Naive thymus-derived CD4-positive, alpha-beta T cell (primary cell): ENCODE measurements at regions of chr6 and their contacts with region 1.

Region 1: DNA sequence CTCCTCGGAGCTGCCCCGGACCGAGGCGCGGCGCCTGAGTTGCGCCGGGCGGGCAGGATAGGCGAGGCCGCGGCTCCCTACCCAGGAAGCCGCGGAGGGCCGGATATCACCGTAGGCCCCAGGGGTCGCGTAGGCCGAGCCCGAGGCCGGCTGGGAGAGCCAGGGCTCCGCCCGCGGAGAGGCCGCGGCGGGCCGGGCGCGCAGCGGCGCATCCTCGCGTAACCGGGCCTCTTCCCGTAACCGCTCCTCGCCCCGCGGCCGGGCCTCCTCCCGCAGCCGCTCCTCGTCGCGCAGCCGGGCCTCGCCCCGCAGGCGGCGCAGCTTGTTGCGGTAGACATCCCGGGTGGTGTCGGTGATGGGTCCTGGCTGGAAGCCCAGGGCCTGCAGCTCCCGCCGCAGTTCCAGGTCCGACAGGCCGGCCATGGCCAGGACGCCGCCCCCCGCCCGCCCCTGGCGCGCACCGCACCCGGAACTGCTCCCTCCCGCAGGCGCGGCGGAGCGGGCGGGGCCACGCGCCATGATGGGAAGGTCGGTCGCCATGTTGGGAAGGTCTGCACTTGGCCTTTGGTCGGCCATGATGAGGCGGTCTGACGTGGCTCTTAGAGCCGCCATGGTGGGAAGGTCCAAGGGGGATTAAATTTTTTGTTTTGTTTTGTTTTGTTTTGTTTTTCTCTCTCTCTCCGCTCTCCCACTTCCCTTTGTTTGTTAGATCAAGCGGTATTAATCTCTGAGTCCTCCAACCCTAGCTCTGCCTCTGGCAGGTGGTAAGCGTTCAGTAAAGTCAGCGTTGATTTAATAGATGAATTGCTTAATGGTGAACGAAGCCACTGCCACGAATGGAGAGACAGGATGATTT is at the start of gene LEMD2:
- DNase-seq: peak; percentile 88 to 96 (median 91)
- ATAC-seq: peak; percentile 94
- H3K4me3 ChIP-seq: peak within 1 kb of the TSS; percentile 80
- H3K4me3 Mint-ChIP-seq: peak within 1 kb of the TSS; percentile 93 to 100 (median 98)
- H3K27ac ChIP-seq: peak within 1 kb of the TSS; percentile 92
- H3K27ac Mint-ChIP-seq: peak within 1 kb of the TSS; percentile 95 to 99 (median 97)
- H3K4me1 ChIP-seq: peaks cover 37 to 40% of the 10 kb centered on the region in 2 donors
- H3K4me1 Mint-ChIP-seq: peaks cover 40 to 55% (median 51%) of the 10 kb centered on the region in 7 donors
- H3K27me3 ChIP-seq: no peaks in the 10 kb centered on the region
- H3K27me3 Mint-ChIP-seq: peaks cover 0 to 25% (median 0%) of the 10 kb centered on the region in 5 donors
- total RNA-seq, gene LEMD2: 71.4 to 124 (median 118) TPM

Region 2: GRCh38 chr6:33410050-33410710 is 378.7 kb before region 1 on chr6:
- CTCF ChIA-PET with region 1: no interaction called
- POLR2A ChIA-PET with region 1: no interaction called
- intact Hi-C with region 1: loop called in 1 of 2 experiments (anchors 2 kb)
- DNase-seq: peak; percentile 94 to 98 (median 95)
- ATAC-seq: peak; percentile 82
- H3K4me3 ChIP-seq: peak overlapping the region; percentile 78
- H3K4me3 Mint-ChIP-seq: peak overlapping the region; percentile 85 to 95 (median 90)
- H3K27ac ChIP-seq: peak overlapping the region; percentile 100
- H3K27ac Mint-ChIP-seq: peak overlapping the region; percentile 65 to 99 (median 97)
- H3K4me1 ChIP-seq: peaks cover 35 to 36% of the 10 kb centered on the region in 2 donors
- H3K4me1 Mint-ChIP-seq: peaks cover 25 to 60% (median 46%) of the 10 kb centered on the region in 7 donors
- H3K27me3 ChIP-seq: no peaks in the 10 kb centered on the region
- H3K27me3 Mint-ChIP-seq: no peaks in the 10 kb centered on the region

Region 3: DNA sequence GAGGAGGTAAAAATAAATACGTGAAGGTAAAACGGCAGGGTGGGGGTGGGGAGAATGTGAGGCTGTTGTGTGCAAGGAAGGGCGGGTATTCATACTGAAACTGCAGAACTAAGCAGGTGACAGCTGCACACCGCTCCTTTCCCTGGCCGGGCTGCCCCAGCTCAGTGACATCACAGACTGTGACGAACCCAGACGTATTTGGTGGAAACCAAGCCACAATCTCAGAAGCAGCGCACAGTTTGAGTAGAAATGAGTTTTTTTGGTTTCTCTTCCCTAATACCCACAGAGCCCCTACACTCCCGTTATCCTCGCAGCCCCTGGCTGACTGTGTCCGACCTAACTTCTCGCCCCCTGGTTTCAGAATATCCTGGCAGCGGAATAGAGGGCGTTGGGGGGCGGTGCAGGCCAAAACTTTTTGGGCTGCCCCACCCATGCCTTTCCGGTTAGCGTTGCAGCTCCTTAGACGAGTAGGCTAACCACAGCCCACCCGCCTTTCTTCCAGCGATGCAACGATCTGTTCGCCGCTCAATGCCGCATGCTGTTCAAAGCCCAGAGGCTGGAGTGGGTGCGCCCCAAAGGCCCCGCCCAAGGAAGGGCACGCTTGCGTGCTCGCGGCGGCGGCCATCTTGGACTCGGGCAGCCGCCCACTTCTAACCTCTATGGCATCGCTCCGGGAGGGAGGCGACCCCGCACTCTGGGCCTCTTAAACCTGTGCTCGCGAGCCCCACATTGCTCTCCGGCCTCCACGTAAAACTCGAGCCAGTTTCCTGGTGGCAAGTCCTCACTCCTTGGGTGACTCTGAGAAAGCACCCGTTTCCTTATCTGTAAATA is 217.9 kb before region 1 on chr6:
- CTCF ChIA-PET with region 1: no interaction called
- POLR2A ChIA-PET with region 1: no interaction called
- intact Hi-C with region 1: loop called in 1 of 2 experiments (anchors 5 kb)
- DNase-seq: peak; percentile 81 to 98 (median 95)
- ATAC-seq: peak; percentile 91
- H3K4me3 ChIP-seq: peak overlapping the region; percentile 85
- H3K4me3 Mint-ChIP-seq: peak overlapping the region; percentile 80 to 99 (median 94)
- H3K27ac ChIP-seq: peak overlapping the region; percentile 98
- H3K27ac Mint-ChIP-seq: peak overlapping the region; percentile 99 to 100 (median 100)
- H3K4me1 ChIP-seq: peaks cover 19 to 21% of the 10 kb centered on the region in 2 donors
- H3K4me1 Mint-ChIP-seq: peaks cover 8 to 57% (median 31%) of the 10 kb centered on the region in 7 donors
- H3K27me3 ChIP-seq: no peaks in the 10 kb centered on the region
- H3K27me3 Mint-ChIP-seq: peaks cover 0 to 3% (median 0%) of the 10 kb centered on the region in 5 donors

Region 4: DNA sequence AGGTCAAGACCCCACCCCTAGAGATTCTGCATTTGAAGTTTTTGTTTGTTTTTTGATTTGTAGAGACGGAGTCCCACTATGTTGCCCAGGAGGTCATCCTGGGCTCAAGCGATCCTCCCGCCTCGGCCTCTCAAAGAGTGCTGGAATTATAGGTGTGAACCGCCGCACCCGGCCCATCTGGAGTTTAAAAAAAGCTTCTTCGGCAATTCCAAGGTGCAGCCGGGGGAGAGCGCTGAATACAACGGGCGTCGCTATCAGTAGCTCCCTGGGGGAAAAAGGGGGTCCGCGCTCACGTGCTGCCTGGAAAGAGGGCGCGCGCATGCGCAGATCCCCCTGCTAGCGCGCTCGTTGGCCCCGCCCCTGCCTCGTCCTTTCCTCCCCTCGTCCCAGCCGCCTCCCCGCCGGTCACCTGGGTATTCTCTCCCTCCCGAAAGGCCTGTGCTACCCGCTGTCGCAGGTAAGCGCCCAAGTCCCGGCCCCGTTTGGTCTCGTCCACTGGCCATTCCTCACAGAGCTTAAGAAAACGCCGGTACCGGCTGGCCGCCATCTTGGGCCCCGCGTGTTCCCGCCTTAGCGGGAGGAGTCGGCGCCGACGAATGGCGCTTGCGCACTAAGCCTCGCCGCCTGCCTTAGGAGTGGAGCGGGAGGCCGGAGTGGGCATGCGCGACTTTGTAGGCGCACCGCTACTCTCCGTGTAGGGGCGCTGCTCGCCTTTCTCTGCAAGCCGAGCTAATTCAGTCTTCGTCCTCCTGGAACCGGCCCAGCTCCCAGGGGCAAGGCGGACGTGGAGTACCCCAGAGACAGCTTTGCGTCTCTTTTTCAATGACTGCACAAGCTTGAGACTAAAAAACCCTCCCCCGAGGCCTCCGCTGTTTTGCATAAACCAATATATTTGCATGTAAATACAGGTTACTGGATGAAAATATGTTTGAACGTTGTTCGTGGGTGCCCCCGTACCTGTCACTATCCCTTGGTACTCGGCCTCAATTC is 77.5 kb before region 1 on chr6 and contains the start of gene UQCC2:
- CTCF ChIA-PET with region 1: no interaction called
- POLR2A ChIA-PET with region 1: interaction called, 8 read pairs
- intact Hi-C with region 1: loop called (anchors 1 kb)
- DNase-seq: peak; percentile 94 to 97 (median 97)
- ATAC-seq: peak; percentile 97
- H3K4me3 ChIP-seq: peak within 1 kb of the TSS; percentile 83
- H3K4me3 Mint-ChIP-seq: peak within 1 kb of the TSS; percentile 94 to 99 (median 98)
- H3K27ac ChIP-seq: peak within 1 kb of the TSS; percentile 91
- H3K27ac Mint-ChIP-seq: peak within 1 kb of the TSS; percentile 94 to 98 (median 98)
- H3K4me1 ChIP-seq: peaks cover 9 to 11% of the 10 kb centered on the region in 2 donors
- H3K4me1 Mint-ChIP-seq: peaks cover 22 to 46% (median 36%) of the 10 kb centered on the region in 7 donors
- H3K27me3 ChIP-seq: no peaks in the 10 kb centered on the region
- H3K27me3 Mint-ChIP-seq: peaks cover 0 to 9% (median 0%) of the 10 kb centered on the region in 5 donors
- total RNA-seq, gene UQCC2: 15.7 to 79.8 (median 23.0) TPM

Region 5: GRCh38 chr6:33860706-33861474 is 72.0 kb after region 1 on chr6:
- CTCF ChIA-PET with region 1: no interaction called
- POLR2A ChIA-PET with region 1: interaction called, 8 read pairs
- intact Hi-C with region 1: loop called in 1 of 2 experiments (anchors 5 kb)
- DNase-seq: peak in 7 of 9 donors; percentile 20 to 68 (median 54)
- ATAC-seq: peak; percentile 30
- H3K4me3 ChIP-seq: no peak overlapping the region
- H3K4me3 Mint-ChIP-seq: peak overlapping the region in 9 of 10 donors; percentile 19 to 63 (median 40)
- H3K27ac ChIP-seq: no peak overlapping the region
- H3K27ac Mint-ChIP-seq: peak overlapping the region in 5 of 9 donors; percentile 12 to 82 (median 35)
- H3K4me1 ChIP-seq: peaks cover 44 to 54% of the 10 kb centered on the region in 2 donors
- H3K4me1 Mint-ChIP-seq: peaks cover 31 to 67% (median 57%) of the 10 kb centered on the region in 7 donors
- H3K27me3 ChIP-seq: no peaks in the 10 kb centered on the region
- H3K27me3 Mint-ChIP-seq: peaks cover 0 to 11% (median 9%) of the 10 kb centered on the region in 5 donors

Region 6: GRCh38 chr6:34223956-34224940 is 435.3 kb after region 1 on chr6:
- CTCF ChIA-PET with region 1: no interaction called
- POLR2A ChIA-PET with region 1: no interaction called
- intact Hi-C with region 1: loop called in 1 of 2 experiments (anchors 2 kb)
- DNase-seq: peak; percentile 85 to 97 (median 91)
- ATAC-seq: peak; percentile 99
- H3K4me3 ChIP-seq: peak overlapping the region; percentile 78
- H3K4me3 Mint-ChIP-seq: peak overlapping the region; percentile 42 to 85 (median 76)
- H3K27ac ChIP-seq: peak overlapping the region; percentile 93
- H3K27ac Mint-ChIP-seq: peak overlapping the region; percentile 82 to 95 (median 88)
- H3K4me1 ChIP-seq: peaks cover 4 to 14% of the 10 kb centered on the region in 2 donors
- H3K4me1 Mint-ChIP-seq: peaks cover 5 to 40% (median 10%) of the 10 kb centered on the region in 7 donors
- H3K27me3 ChIP-seq: no peaks in the 10 kb centered on the region
- H3K27me3 Mint-ChIP-seq: no peaks in the 10 kb centered on the region